Cardiac septum (tissue), 1 donor: ENCODE measurements at regions of chr14 and their contacts with region 1.

Region 1: DNA sequence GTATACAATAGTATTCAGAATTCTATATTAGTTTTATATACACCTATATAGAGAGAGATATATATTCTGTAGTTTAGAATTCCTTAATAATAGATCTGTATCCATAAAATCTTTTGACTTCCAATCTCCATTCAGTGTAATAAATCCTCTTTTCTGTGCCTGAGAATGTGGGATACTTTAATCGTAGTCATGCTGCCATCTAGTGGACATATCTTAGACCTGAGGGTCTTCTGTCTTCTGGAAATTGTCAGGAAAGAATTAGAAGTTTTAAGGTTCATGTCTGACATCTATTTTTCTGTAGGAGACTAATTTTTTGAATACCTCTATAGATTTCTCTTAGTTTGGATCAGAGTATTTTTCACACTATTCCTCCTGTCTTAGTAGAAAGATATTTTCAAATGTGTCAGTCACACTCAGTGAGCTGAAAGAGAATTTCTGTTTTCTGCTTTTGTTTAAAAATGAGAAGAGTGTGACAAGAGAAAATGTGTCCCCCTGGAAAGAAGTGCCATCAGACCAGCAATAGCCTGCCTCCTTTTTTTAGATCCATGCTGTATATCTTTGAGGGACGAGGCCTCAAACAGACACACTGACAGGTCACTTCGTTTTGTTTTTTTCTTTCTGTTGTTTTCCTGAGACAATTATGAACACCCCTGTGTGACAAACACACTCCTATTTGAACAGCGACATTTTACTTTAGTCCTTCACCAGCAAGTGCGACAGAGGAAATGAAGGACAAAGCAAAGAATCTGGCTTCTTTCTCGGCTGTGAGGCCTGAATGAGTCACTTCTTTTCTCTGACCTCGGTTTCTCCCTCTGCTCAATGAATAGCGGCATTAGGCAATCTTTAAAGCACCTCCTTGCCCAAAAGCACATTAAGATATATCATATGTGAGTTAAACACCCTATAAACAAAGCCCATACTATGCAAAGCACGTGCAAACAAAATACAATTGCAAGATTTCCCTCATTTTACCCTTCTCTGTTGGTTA is 96.3 kb downstream of the GALC start:
- DNase-seq: no peak

Region 2: GRCh38 chr14:87745507-87746118 is 151.1 kb before region 1 on chr14:
- intact Hi-C with region 1: loop called (anchors 5 kb)
- DNase-seq: no peak

Region 3: GRCh38 chr14:87805315-87805723 is 91.4 kb before region 1 on chr14:
- intact Hi-C with region 1: loop called (anchors 5 kb)
- DNase-seq: no peak